ENCODE measurements at regions of chr12 and their contacts with region 1.

Region 1: GRCh38 chr12:11885261-11886038 is 185.3 kb upstream of the BCL2L14 start:
- DNase-seq: no peak

Region 2: DNA sequence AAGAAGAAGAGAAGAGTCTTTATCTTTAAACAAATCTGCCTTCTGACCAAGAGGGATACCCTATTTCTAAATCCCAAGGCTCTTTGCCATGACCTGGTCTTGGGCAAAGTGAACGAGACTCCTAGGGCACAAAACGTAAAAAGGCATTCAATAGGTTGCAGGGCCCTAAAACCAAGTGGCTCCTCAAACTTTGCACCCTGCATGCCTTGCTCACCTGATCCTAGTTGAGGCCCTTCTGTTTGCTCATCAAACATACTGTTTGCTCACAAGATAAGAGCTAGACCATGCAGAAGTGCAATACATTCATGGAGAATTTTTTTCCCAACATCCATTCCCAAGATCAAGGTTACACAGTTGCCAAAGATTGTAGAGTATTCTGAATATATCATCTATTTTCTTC is 993.5 kb before region 1 on chr12:
- intact Hi-C with region 1: loop called in 1 of 2 experiments (anchors 10 kb)
- DNase-seq: no peak

Region 3: GRCh38 chr12:11648831-11649702 is 236.4 kb before region 1 on chr12 and contains the start of gene ETV6:
- intact Hi-C with region 1: loop called in 1 of 2 experiments (anchors 5 kb)
- DNase-seq: peak; percentile 90
- total RNA-seq, gene ETV6: 60.3 to 65.7 TPM

Region 4: GRCh38 chr12:11827091-11828061 is 58.1 kb before region 1 on chr12:
- intact Hi-C with region 1: loop called in 1 of 2 experiments (anchors 5 kb)
- DNase-seq: no peak

Region 5: DNA sequence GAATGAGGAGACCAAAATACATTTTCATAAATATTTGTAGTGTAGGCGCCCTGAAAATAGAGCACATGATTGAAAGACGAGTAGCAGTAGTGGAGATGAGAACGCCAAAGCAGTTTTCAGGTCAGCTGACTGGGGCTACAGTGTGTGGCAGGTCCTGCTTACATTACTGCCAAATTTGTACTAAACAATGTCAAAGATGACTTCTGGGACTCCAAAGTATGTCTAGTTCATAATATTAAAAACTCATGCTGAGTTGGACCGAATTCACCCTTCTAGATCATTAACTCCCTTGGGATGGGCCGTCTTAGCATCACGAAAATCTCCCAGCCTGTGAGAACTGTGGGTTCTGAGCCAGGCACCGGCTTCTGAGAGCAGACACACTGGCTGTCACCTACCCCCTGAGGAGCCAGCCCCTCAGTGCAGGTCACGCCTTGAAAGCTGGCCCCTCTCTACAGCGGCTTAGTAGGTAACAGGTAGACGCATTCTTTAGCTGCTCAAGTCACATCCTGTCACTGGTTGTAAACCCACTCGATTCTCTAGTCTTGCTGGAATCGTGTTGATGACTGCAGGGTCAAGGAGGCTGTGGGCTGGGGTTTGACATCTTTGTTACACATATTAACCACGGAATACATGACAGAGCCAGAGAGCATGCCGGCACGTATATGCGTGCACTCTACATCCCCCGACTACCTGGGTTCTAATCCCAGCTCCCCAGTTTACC is 25.6 kb before region 1 on chr12:
- intact Hi-C with region 1: loop called in 1 of 2 experiments (anchors 1 kb)
- DNase-seq: no peak

Measured in posterior vena cava (tissue), 2 donors.